Activated B cell treated with CpG ODN at 0.5 μM for 24 hours (primary cell): ENCODE measurements at regions of chr6 and their contacts with region 1.

Region 1: GRCh38 chr6:159989492-159990480 is 20.9 kb downstream of the IGF2R start:
- DNase-seq: no peak
- ATAC-seq: peak; percentile 85
- H3K4me3 Mint-ChIP-seq: peak overlapping the region; percentile 33
- H3K27ac Mint-ChIP-seq: peak overlapping the region; percentile 72
- H3K4me1 Mint-ChIP-seq: peaks cover 51% of the 10 kb centered on the region
- H3K27me3 Mint-ChIP-seq: no peaks in the 10 kb centered on the region
- CTCF ChIP-seq: no peak

Region 2: DNA sequence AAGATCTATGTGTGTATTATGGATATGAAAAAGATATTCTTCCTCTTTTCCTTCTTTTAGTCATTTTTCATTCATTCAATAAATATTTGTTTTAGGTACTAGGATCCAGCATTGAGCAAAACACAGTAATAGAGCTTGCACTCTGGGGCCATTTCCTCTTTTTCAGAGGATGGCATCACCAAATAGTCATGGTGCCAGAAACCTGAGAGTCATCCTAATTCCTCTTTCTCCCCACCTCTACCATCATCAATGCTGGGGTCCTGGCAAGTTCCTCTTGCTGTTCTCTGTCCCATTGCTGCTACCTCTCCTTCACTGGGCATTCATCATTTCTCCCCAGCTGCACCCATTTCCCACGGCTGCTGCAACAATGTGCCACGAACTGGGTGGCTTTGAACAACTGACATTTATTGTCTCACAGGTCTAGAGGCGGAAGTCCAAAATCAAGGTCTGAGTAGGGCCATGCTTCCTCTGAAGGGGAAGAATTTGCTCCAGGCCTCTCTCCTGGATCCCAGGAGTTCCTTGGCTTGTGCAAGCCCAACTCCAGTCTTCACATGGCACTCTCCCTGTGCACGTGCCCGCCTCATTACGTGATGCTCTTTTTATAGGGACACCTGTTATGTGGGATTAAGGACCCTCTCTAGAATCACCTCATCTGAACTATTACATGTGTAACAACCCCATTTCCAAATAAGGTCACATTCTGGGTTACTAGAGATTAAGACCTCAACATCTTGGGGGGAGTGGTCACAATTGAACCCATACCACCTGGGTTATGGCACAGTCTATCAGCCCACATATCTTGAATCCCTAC is 30.4 kb before region 1 on chr6:
- CTCF ChIA-PET with region 1: no interaction called
- POLR2A ChIA-PET with region 1: no interaction called
- intact Hi-C with region 1: loop called (anchors 5 kb)
- DNase-seq: no peak
- ATAC-seq: peak; percentile 97
- H3K4me3 Mint-ChIP-seq: no peak overlapping the region
- H3K27ac Mint-ChIP-seq: peak overlapping the region; percentile 57
- H3K4me1 Mint-ChIP-seq: peaks cover 14% of the 10 kb centered on the region
- H3K27me3 Mint-ChIP-seq: no peaks in the 10 kb centered on the region
- CTCF ChIP-seq: no peak

Region 3: GRCh38 chr6:160030103-160030502 is 40.3 kb after region 1 on chr6:
- CTCF ChIA-PET with region 1: no interaction called
- POLR2A ChIA-PET with region 1: no interaction called
- intact Hi-C with region 1: no loop called
- DNase-seq: no peak
- ATAC-seq: no peak
- H3K4me3 Mint-ChIP-seq: no peak overlapping the region
- H3K27ac Mint-ChIP-seq: no peak overlapping the region
- H3K4me1 Mint-ChIP-seq: peaks cover 24% of the 10 kb centered on the region
- H3K27me3 Mint-ChIP-seq: no peaks in the 10 kb centered on the region
- CTCF ChIP-seq: no peak